Ovary (tissue), 10 donors: ENCODE measurements at regions of chr18 and their contacts with region 1.

Region 1: GRCh38 chr18:23550898-23551297 is 35.4 kb downstream of the NPC1 start:
- DNase-seq: no peak
- H3K4me3 ChIP-seq: no peak overlapping the region
- H3K27ac ChIP-seq: no peak overlapping the region
- H3K4me1 ChIP-seq: no peaks in the 10 kb centered on the region
- H3K27me3 ChIP-seq: no peaks in the 10 kb centered on the region
- CTCF ChIP-seq: no peak
- EP300 ChIP-seq: no peak
- POLR2A ChIP-seq: no peak

Region 2: GRCh38 chr18:23479829-23480505 is 70.9 kb before region 1 on chr18:
- intact Hi-C with region 1: loop called in 1 of 4 experiments (anchors 2 kb)
- DNase-seq: no peak
- H3K4me3 ChIP-seq: no peak overlapping the region
- H3K27ac ChIP-seq: no peak overlapping the region
- H3K4me1 ChIP-seq: no peaks in the 10 kb centered on the region
- H3K27me3 ChIP-seq: no peaks in the 10 kb centered on the region
- CTCF ChIP-seq: no peak
- EP300 ChIP-seq: no peak
- POLR2A ChIP-seq: no peak